ENCODE measurements at regions of chr2 and their contacts with region 1.

Region 1: DNA sequence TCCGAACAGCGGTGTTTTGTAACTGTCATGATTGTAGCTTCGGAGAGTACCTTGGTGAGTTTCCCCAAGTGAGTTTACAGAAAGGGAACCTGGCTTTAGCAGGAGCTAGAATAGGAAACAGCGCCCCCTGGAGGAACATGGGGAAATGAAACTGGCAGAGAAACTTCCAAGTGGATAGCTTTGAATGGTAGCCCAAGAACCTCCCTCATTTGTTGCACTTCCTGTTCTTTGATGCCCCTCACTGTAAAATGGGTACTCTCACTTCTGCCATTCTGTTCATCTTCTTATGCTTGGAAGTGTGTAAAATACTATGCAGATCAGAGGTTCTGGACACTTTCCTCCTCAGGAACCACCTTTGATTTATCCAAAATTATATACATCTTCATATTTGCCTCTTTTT is 36.2 kb downstream of the CHST10 start:
- DNase-seq: peak; percentile 91
- ATAC-seq: peak; percentile 91
- H3K4me3 ChIP-seq: no peak overlapping the region
- H3K4me3 Mint-ChIP-seq: no peak overlapping the region
- H3K27ac ChIP-seq: no peak overlapping the region
- H3K27ac Mint-ChIP-seq: no peak overlapping the region
- H3K4me1 ChIP-seq: peaks cover 0 to 6% of the 10 kb centered on the region in 2 donors
- H3K4me1 Mint-ChIP-seq: peaks cover 8% of the 10 kb centered on the region
- H3K27me3 ChIP-seq: peaks cover 0 to 4% (median 0%) of the 10 kb centered on the region in 4 experiments
- H3K27me3 Mint-ChIP-seq: no peaks in the 10 kb centered on the region
- CTCF ChIP-seq: peak; percentile 91

Region 2: DNA sequence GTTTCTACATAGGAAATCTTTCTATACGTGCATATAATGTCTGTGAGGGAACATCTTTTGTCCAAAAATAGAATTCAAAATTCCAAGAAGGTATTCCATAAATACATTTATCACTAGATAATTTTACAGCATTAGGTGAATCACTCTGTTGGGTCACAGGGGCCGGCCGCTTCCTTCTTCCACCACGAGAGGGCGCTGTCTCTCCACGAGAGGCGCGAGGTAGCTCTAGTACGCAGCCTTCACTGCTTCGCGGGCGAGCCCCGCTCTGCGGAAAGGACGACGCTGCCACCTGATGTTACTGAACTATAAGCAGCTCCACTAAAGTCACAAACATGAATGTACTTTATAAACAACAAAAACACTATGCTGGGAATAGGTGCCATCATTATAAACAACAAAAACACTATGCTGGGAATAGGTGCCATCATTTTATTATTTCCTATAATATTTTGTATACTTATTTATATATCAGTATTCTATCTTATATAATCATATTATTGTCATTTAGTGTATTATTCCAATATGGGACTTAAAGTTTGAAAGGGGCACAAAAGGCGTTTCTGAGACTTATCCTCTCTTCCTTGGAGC is 822.1 kb before region 1 on chr2:
- CTCF ChIA-PET with region 1: interaction called, 11 read pairs
- POLR2A ChIA-PET with region 1: no interaction called
- intact Hi-C with region 1: loop called (anchors 1 kb)
- DNase-seq: peak; percentile 84
- ATAC-seq: peak; percentile 95
- H3K4me3 ChIP-seq: no peak overlapping the region
- H3K4me3 Mint-ChIP-seq: no peak overlapping the region
- H3K27ac ChIP-seq: peak overlapping the region in 1 of 2 donors; percentile 25
- H3K27ac Mint-ChIP-seq: peak overlapping the region; percentile 65
- H3K4me1 ChIP-seq: no peaks in the 10 kb centered on the region
- H3K4me1 Mint-ChIP-seq: peaks cover 4% of the 10 kb centered on the region
- H3K27me3 ChIP-seq: no peaks in the 10 kb centered on the region
- H3K27me3 Mint-ChIP-seq: no peaks in the 10 kb centered on the region
- CTCF ChIP-seq: peak; percentile 100

Region 3: GRCh38 chr2:100365434-100365833 is 15.8 kb before region 1 on chr2:
- CTCF ChIA-PET with region 1: interaction called, 17 read pairs
- POLR2A ChIA-PET with region 1: no interaction called
- intact Hi-C with region 1: no loop called
- DNase-seq: no peak
- ATAC-seq: no peak
- H3K4me3 ChIP-seq: no peak overlapping the region
- H3K4me3 Mint-ChIP-seq: no peak overlapping the region
- H3K27ac ChIP-seq: no peak overlapping the region
- H3K27ac Mint-ChIP-seq: no peak overlapping the region
- H3K4me1 ChIP-seq: no peaks in the 10 kb centered on the region
- H3K4me1 Mint-ChIP-seq: no peaks in the 10 kb centered on the region
- H3K27me3 ChIP-seq: peaks cover 0 to 3% (median 0%) of the 10 kb centered on the region in 4 experiments
- H3K27me3 Mint-ChIP-seq: peaks cover 31% of the 10 kb centered on the region
- CTCF ChIP-seq: no peak

Region 4: GRCh38 chr2:100416935-100417710 is 35.9 kb after region 1 on chr2 and contains the start of gene CHST10:
- CTCF ChIA-PET with region 1: interaction called, 9 read pairs
- POLR2A ChIA-PET with region 1: no interaction called
- intact Hi-C with region 1: loop called (anchors 5 kb)
- DNase-seq: peak; percentile 77
- ATAC-seq: peak; percentile 93
- H3K4me3 ChIP-seq: peak within 1 kb of the TSS; percentile 65 to 95 (median 79)
- H3K4me3 Mint-ChIP-seq: peak within 1 kb of the TSS; percentile 93
- H3K27ac ChIP-seq: peak within 1 kb of the TSS in 1 of 2 donors; percentile 60
- H3K27ac Mint-ChIP-seq: peak within 1 kb of the TSS; percentile 54
- H3K4me1 ChIP-seq: peaks cover 11 to 14% of the 10 kb centered on the region in 2 donors
- H3K4me1 Mint-ChIP-seq: peaks cover 22% of the 10 kb centered on the region
- H3K27me3 ChIP-seq: no peaks in the 10 kb centered on the region
- H3K27me3 Mint-ChIP-seq: no peaks in the 10 kb centered on the region
- CTCF ChIP-seq: no peak
- total RNA-seq, gene CHST10: 9.9 and 10.7 TPM in 2 replicates